ENCODE measurements at regions of chr10 and their contacts with region 1.

Region 1: GRCh38 chr10:7424315-7424714 is 13.5 kb upstream of the SFMBT2 start:
- DNase-seq: no peak
- ATAC-seq: no peak
- H3K4me3 ChIP-seq: no peak overlapping the region
- H3K27ac ChIP-seq: no peak overlapping the region
- H3K4me1 ChIP-seq: peaks cover 6% of the 10 kb centered on the region
- H3K27me3 ChIP-seq: no peaks in the 10 kb centered on the region
- CTCF ChIP-seq: no peak
- EP300 ChIP-seq: no peak
- POLR2A ChIP-seq: no peak
- RAD21 ChIP-seq: peak; percentile 28; the same call in 1 of the 2 replicates

Region 2: GRCh38 chr10:7435674-7436073 is 11.4 kb after region 1 on chr10:
- CTCF ChIA-PET with region 1: interaction called, 5 read pairs
- POLR2A ChIA-PET with region 1: interaction called, 3 read pairs
- RAD21 ChIA-PET with region 1: interaction called, 3 read pairs
- SMC1A ChIA-PET with region 1: interaction called, 24 read pairs
- in situ Hi-C with region 1: no loop called
- intact Hi-C with region 1: no loop called
- DNase-seq: no peak
- ATAC-seq: peak; percentile 88
- H3K4me3 ChIP-seq: no peak overlapping the region
- H3K27ac ChIP-seq: peak overlapping the region; percentile 48; the same call in 1 of the 2 replicates
- H3K4me1 ChIP-seq: peaks cover 20% of the 10 kb centered on the region
- H3K27me3 ChIP-seq: no peaks in the 10 kb centered on the region
- CTCF ChIP-seq: no peak
- EP300 ChIP-seq: 0 out of 4 replicates have a peak, but pooled peaks of 1 of the 2 experiments have one; percentile 20
- POLR2A ChIP-seq: no peak
- RAD21 ChIP-seq: no peak

Region 3: DNA sequence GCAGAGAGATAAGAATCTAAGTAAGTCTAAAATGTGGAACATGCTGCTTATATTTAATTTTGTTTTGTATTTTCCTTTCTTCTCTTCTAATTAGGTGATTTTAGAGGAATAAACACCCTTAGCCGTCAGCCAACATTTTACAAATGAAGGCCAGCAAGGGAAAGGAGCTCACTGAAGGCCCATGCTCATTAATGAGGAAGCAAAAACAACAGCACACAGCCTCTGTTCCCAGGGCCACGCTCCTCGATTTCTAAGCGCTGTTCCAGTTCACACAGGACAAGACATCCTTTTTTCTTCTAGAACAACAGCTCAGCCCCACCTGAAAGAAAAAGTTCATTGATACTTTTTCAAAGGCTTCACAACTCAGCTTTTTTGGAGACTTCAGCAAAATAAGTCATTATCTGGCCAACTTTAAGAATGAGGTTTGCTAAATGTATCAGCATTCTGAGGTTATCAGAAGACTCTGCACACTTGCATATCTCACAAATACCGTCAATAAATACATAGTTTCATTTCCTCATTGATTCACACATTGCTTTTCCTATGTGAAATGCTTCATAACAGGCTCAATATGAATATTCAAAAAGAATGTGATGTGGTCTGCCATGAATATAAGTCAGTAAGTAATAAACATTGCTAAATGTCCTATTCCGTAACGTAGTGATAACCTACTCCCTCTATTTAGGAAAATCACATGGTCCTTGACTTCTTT is 21.3 kb after region 1 on chr10:
- CTCF ChIA-PET with region 1: interaction called, 3 read pairs
- POLR2A ChIA-PET with region 1: interaction called, 3 read pairs
- RAD21 ChIA-PET with region 1: interaction called, 4 read pairs
- SMC1A ChIA-PET with region 1: interaction called, 15 read pairs
- in situ Hi-C with region 1: no loop called
- intact Hi-C with region 1: no loop called
- DNase-seq: no peak
- ATAC-seq: peak; percentile 90
- H3K4me3 ChIP-seq: no peak overlapping the region
- H3K27ac ChIP-seq: peak overlapping the region; percentile 85
- H3K4me1 ChIP-seq: peaks cover 21% of the 10 kb centered on the region
- H3K27me3 ChIP-seq: no peaks in the 10 kb centered on the region
- CTCF ChIP-seq: no peak
- EP300 ChIP-seq: peak; percentile 8 to 69; a peak in 3 of 4 replicates
- POLR2A ChIP-seq: no peak
- RAD21 ChIP-seq: no peak

Measured in GM12878 (cell line).